MCF 10A (cell line): ENCODE measurements at regions of chr6 and their contacts with region 1.

Region 1: DNA sequence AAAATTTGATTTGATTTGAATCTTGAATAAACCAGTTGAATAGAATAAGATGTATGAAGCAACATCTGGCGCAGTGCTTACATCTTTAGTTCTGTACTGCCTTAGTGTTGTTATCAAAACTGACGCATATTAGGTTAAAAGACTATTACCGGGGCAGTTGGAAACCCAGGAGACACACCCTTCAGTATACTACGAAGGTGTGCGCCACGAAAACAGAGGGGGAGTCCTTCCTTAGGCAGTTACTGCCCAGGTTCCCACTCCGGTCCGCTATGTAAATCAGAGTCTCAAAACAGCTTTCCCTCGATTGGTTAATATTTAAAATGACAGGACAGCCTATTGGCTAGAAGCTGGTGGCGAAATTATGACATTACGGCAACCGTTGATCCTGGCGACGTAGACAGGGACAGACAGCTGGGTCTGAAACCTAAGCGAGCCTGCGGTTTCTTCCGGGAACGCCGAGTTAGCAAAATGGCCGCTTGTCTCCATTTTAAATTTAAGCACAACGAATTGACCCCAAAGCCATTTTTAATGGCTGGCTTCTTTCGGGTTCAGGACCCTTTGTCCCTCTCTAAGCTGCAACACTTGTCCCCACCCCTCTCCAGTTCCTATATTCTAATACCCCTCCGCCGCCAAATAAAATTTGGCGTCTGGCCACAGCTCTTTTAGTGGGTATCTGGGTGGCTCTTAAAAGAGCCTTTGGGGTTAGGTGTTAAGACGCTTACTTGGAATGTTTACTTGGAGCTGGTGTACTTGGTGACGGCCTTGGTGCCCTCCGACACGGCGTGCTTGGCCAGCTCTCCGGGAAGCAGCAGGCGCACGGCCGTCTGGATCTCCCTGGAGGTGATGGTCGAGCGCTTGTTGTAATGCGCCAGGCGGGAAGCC is 35.8 kb downstream of the HFE start:
- DNase-seq: peak; percentile 99
- H3K4me3 Mint-ChIP-seq: peak overlapping the region; percentile 98
- H3K27ac Mint-ChIP-seq: peak overlapping the region; percentile 99
- H3K4me1 Mint-ChIP-seq: peaks cover 14% of the 10 kb centered on the region
- H3K27me3 Mint-ChIP-seq: no peaks in the 10 kb centered on the region
- CTCF ChIP-seq: no peak

Region 2: GRCh38 chr6:26045065-26045927 is 77.7 kb before region 1 on chr6:
- CTCF ChIA-PET with region 1: no interaction called
- POLR2A ChIA-PET with region 1: interaction called, 179 read pairs
- intact Hi-C with region 1: no loop called
- DNase-seq: peak; percentile 95
- H3K4me3 Mint-ChIP-seq: peak overlapping the region; percentile 80
- H3K27ac Mint-ChIP-seq: peak overlapping the region; percentile 86
- H3K4me1 Mint-ChIP-seq: peaks cover 16% of the 10 kb centered on the region
- H3K27me3 Mint-ChIP-seq: no peaks in the 10 kb centered on the region
- CTCF ChIP-seq: no peak

Region 3: GRCh38 chr6:26136321-26136720 is 13.3 kb after region 1 on chr6:
- CTCF ChIA-PET with region 1: no interaction called
- POLR2A ChIA-PET with region 1: interaction called, 23 read pairs
- intact Hi-C with region 1: no loop called
- DNase-seq: no peak
- H3K4me3 Mint-ChIP-seq: no peak overlapping the region
- H3K27ac Mint-ChIP-seq: no peak overlapping the region
- H3K4me1 Mint-ChIP-seq: peaks cover 24% of the 10 kb centered on the region
- H3K27me3 Mint-ChIP-seq: no peaks in the 10 kb centered on the region
- CTCF ChIP-seq: no peak

Region 4: GRCh38 chr6:26183581-26184366 is 60.7 kb after region 1 on chr6:
- CTCF ChIA-PET with region 1: interaction called, 3 read pairs
- POLR2A ChIA-PET with region 1: interaction called, 170 read pairs
- intact Hi-C with region 1: no loop called
- DNase-seq: peak; percentile 56
- H3K4me3 Mint-ChIP-seq: peak overlapping the region; percentile 79
- H3K27ac Mint-ChIP-seq: peak overlapping the region; percentile 84
- H3K4me1 Mint-ChIP-seq: peaks cover 27% of the 10 kb centered on the region
- H3K27me3 Mint-ChIP-seq: no peaks in the 10 kb centered on the region
- CTCF ChIP-seq: no peak

Region 5: DNA sequence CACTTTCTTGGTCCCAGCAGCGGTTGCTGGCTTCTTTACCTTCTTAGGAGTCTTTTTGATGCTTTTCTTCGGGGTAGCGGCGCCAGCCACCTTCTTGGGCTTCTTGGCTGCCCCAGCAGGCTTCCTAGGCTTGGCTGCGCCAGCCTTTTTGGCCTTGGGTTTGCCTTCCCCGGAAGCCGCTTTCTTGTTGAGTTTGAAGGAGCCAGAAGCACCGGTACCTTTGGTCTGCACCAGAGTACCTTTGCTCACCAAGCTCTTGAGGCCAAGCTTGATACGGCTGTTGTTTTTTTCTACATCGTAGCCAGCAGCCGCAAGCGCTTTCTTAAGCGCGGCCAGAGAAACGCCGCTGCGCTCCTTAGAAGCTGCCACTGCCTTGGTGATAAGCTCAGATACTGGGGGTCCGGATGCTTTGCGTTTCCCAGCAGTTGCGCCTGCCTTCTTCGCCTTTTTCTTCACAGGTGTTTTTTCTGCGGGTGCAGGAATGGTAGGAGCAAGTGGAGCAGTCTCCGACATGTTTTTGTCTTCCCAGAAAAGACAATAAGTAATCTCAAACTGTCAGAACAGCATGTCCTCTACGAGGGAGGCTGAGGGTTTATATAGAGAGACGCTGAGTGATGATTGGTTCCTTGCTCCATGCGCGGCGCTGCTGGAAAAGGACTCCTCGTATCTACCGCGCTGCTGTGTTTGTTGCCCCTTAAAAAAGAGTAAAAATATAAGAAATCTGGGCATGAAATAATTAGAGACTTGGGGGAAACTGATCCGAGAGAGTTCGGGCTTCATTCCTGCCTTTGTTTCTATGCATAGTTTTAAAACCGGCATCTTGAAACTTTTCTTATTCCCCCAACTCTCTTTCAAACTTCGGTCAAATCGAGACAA is 111.6 kb after region 1 on chr6:
- CTCF ChIA-PET with region 1: no interaction called
- POLR2A ChIA-PET with region 1: interaction called, 45 read pairs
- intact Hi-C with region 1: no loop called
- DNase-seq: peak; percentile 90
- H3K4me3 Mint-ChIP-seq: peak overlapping the region; percentile 82
- H3K27ac Mint-ChIP-seq: peak overlapping the region; percentile 85
- H3K4me1 Mint-ChIP-seq: peaks cover 32% of the 10 kb centered on the region
- H3K27me3 Mint-ChIP-seq: no peaks in the 10 kb centered on the region
- CTCF ChIP-seq: no peak

Region 6: DNA sequence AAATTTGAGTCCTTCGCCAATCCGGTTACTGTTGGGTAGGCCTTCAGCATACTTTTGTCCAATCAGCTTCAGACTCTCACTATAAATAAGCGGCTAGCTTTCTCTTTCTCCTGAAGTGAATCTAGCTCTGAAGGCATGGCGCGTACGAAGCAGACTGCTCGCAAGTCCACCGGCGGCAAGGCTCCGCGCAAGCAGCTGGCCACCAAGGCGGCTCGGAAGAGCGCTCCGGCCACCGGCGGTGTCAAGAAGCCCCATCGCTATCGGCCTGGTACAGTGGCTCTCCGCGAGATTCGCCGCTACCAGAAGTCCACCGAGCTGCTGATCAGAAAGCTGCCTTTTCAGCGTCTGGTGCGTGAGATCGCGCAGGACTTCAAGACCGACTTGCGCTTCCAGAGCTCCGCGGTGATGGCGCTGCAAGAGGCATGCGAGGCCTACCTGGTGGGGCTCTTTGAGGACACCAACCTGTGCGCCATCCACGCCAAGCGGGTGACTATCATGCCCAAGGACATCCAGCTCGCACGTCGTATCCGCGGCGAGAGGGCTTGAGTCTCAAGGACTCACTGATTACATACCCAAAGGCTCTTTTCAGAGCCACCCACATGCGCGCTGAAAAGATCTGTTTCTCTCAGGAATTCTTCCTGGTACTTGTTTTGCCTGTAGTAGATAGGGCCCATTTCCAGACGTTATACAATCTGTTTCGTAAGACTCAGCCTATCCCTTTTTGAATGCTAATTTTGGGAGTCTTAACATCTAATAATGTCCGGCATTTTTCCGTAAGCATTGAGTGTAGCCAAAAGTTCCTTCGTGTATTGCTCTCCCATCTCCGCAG is 1687.1 kb after region 1 on chr6:
- CTCF ChIA-PET with region 1: no interaction called
- POLR2A ChIA-PET with region 1: interaction called, 153 read pairs
- intact Hi-C with region 1: no loop called
- DNase-seq: peak; percentile 96
- H3K4me3 Mint-ChIP-seq: peak overlapping the region; percentile 86
- H3K27ac Mint-ChIP-seq: peak overlapping the region; percentile 94
- H3K4me1 Mint-ChIP-seq: peaks cover 20% of the 10 kb centered on the region
- H3K27me3 Mint-ChIP-seq: no peaks in the 10 kb centered on the region
- CTCF ChIP-seq: no peak

Region 7: DNA sequence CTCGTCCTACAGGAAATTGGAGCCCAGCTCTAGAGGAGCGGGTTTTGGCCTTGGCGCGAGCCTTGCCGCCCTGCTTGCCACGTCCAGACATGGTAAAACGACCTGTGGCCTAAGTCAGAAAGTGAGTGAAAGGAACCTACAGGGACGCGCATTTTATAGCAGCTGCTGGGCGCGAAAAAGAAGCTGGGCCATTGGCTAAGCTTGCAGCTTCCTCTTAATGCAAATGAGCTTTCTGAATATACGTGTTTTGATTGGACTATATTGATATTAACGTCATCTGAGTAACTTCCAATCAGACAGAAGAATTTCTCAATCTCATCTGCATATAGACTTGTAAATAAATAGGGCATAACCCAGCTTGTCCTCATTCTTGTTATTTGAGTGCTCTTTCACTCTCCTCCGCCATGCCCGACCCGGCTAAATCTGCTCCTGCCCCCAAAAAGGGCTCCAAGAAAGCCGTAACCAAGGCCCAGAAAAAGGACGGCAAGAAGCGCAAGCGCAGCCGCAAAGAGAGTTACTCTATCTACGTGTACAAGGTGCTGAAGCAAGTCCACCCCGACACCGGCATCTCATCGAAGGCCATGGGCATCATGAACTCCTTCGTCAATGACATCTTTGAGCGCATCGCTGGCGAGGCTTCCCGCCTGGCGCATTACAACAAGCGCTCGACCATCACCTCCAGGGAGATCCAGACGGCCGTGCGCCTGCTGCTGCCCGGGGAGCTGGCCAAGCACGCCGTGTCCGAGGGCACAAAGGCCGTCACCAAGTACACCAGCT is 1770.2 kb after region 1 on chr6:
- CTCF ChIA-PET with region 1: no interaction called
- POLR2A ChIA-PET with region 1: interaction called, 58 read pairs
- intact Hi-C with region 1: no loop called
- DNase-seq: peak; percentile 98
- H3K4me3 Mint-ChIP-seq: no peak overlapping the region
- H3K27ac Mint-ChIP-seq: no peak overlapping the region
- H3K4me1 Mint-ChIP-seq: peaks cover 12% of the 10 kb centered on the region
- H3K27me3 Mint-ChIP-seq: no peaks in the 10 kb centered on the region
- CTCF ChIP-seq: no peak